MCF 10A (cell line): ENCODE measurements at regions of chr9 and their contacts with region 1.

Region 1: GRCh38 chr9:27945388-27945787 is 372.1 kb upstream of the C9orf72 start:
- DNase-seq: peak; percentile 18
- H3K4me3 Mint-ChIP-seq: no peak overlapping the region
- H3K27ac Mint-ChIP-seq: no peak overlapping the region
- H3K4me1 Mint-ChIP-seq: no peaks in the 10 kb centered on the region
- H3K27me3 Mint-ChIP-seq: peaks cover 53% of the 10 kb centered on the region
- CTCF ChIP-seq: no peak

Region 2: DNA sequence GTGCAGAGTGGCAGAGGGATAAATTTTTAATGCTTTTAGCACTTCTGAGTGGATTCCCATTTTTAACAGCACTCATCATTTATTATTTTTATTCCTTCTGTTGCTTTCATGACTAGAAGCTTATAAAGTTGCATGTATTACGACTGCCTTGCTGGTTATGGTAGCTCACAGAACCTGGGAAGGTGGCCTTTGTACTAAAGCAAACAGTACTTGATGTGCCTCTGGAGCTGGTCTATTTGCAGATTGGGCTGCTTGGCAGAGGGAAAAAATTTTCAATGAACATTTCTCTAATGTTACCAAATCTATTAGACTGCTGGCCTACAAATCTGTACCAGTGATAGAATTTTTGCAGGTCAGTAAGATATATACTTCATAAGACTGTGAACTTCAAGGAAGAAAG is 97.6 kb before region 1 on chr9:
- CTCF ChIA-PET with region 1: no interaction called
- POLR2A ChIA-PET with region 1: no interaction called
- intact Hi-C with region 1: no loop called
- DNase-seq: no peak
- H3K4me3 Mint-ChIP-seq: no peak overlapping the region
- H3K27ac Mint-ChIP-seq: no peak overlapping the region
- H3K4me1 Mint-ChIP-seq: no peaks in the 10 kb centered on the region
- H3K27me3 Mint-ChIP-seq: peaks cover 92% of the 10 kb centered on the region
- CTCF ChIP-seq: no peak

Region 3: DNA sequence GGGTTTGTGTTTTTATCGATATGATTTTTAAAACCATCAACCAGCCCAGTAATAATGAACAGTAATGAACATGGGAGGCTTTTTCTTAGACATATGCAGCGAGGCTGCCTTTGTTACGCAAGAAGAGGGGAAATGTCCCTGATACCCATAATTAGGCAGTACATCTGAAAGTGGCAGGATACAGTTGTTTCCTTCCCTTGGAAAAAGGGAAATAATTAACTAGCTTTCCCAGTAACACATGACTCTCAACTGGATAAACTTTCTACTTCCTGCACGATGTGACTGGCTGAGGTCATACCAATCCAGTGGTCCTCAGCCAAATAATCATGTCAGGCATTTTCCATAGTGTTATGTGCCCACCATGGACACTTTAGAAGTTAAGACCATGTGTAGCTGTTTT is 59.5 kb after region 1 on chr9:
- CTCF ChIA-PET with region 1: no interaction called
- POLR2A ChIA-PET with region 1: no interaction called
- intact Hi-C with region 1: loop called (anchors 10 kb)
- DNase-seq: no peak
- H3K4me3 Mint-ChIP-seq: no peak overlapping the region
- H3K27ac Mint-ChIP-seq: no peak overlapping the region
- H3K4me1 Mint-ChIP-seq: no peaks in the 10 kb centered on the region
- H3K27me3 Mint-ChIP-seq: peaks cover 21% of the 10 kb centered on the region
- CTCF ChIP-seq: no peak